ENCODE measurements at regions of chr10 and their contacts with region 1.

Region 1: GRCh38 chr10:132452631-132453469 is 55.9 kb downstream of the PWWP2B start:
- DNase-seq: peak; percentile 51 to 74
- H3K4me3 ChIP-seq: no peak overlapping the region
- H3K27ac ChIP-seq: no peak overlapping the region
- H3K4me1 ChIP-seq: peaks cover 21% of the 10 kb centered on the region
- H3K27me3 ChIP-seq: no peaks in the 10 kb centered on the region
- CTCF ChIP-seq: peak; percentile 91

Region 2: DNA sequence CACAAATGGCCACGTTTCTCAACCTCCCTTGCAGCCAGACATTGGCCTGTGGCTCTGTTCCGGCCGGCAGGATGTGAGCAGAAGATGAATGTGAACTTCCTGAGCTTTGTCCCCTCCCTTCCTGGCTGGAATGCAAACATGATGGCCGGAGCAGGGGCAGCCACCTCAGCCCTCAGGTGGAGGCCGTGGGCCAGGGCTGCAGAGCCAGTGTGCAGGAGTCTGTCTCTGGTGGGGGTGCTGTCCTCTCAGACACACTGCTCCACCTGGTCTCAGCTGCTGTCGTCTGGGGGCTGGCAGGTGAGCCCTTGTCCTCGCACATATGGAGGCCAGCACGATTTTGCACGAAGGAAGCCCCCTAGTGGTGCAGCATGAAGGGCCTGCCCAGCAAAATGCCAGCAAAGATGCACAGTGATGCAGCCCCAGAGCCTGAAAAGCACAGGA is 81.2 kb before region 1 on chr10:
- CTCF ChIA-PET with region 1: no interaction called
- POLR2A ChIA-PET with region 1: interaction called, 10 read pairs
- intact Hi-C with region 1: no loop called
- DNase-seq: no peak
- H3K4me3 ChIP-seq: no peak overlapping the region
- H3K27ac ChIP-seq: no peak overlapping the region
- H3K4me1 ChIP-seq: no peaks in the 10 kb centered on the region
- H3K27me3 ChIP-seq: no peaks in the 10 kb centered on the region
- CTCF ChIP-seq: peak; percentile 58; the same call in 1 of the 2 replicates

Region 3: DNA sequence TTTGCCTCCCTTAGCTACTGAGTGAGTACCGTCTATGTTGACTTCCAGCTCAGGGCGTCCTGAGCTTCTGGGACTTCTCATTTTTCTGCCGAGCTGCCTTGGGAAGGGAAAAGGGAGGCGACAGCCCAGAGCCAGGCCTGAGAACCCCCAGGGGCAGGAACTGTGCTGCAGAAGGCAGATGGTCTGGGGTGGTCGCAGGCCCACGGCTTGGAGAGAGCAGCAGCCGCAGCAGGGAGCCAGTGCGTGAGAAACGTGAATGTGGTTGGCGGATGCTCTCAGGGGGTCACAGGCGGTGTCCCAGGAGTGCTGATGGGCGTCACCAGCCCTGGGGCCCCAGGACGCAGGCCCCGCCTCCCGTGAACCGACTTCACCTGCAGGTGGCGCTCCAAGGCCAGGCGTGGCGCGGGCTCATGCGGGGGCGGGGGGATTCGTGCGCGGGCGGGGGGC is 65.1 kb before region 1 on chr10:
- CTCF ChIA-PET with region 1: no interaction called
- POLR2A ChIA-PET with region 1: no interaction called
- intact Hi-C with region 1: loop called (anchors 2 kb)
- DNase-seq: peak in 1 of 2 experiments; percentile 64
- H3K4me3 ChIP-seq: no peak overlapping the region
- H3K27ac ChIP-seq: no peak overlapping the region
- H3K4me1 ChIP-seq: peaks cover under 1% of the 10 kb centered on the region
- H3K27me3 ChIP-seq: no peaks in the 10 kb centered on the region
- CTCF ChIP-seq: peak; percentile 61